ENCODE measurements at regions of chr4 and their contacts with region 1.

Region 1: GRCh38 chr4:69057620-69058409 is 38.5 kb upstream of the UGT2B7 start:
- DNase-seq: peak; percentile 93
- ATAC-seq: peak; percentile 87
- H3K4me3 ChIP-seq: peak overlapping the region; percentile 11 to 43 (median 31); a peak in 5 of 6 replicates
- H3K27ac ChIP-seq: peak overlapping the region; percentile 88
- H3K4me1 ChIP-seq: peaks cover 78% of the 10 kb centered on the region
- H3K27me3 ChIP-seq: no peaks in the 10 kb centered on the region
- CTCF ChIP-seq: no peak
- EP300 ChIP-seq: peak in 1 of 2 experiments; percentile 71; a peak in 1 of 4 replicates
- POLR2A ChIP-seq: peak; percentile 14 to 38
- RAD21 ChIP-seq: no peak

Region 2: GRCh38 chr4:68820770-68821169 is 237.0 kb before region 1 on chr4:
- CTCF ChIA-PET with region 1: no interaction called
- POLR2A ChIA-PET with region 1: interaction called, 3 read pairs
- in situ Hi-C with region 1: no loop called
- intact Hi-C with region 1: loop called (anchors 5 kb)
- DNase-seq: no peak
- ATAC-seq: no peak
- H3K4me3 ChIP-seq: no peak overlapping the region
- H3K27ac ChIP-seq: no peak overlapping the region
- H3K4me1 ChIP-seq: peaks cover 77% of the 10 kb centered on the region
- H3K27me3 ChIP-seq: no peaks in the 10 kb centered on the region
- CTCF ChIP-seq: no peak
- EP300 ChIP-seq: no peak
- POLR2A ChIP-seq: no peak
- RAD21 ChIP-seq: no peak

Region 3: GRCh38 chr4:68861057-68861456 is 196.8 kb before region 1 on chr4:
- CTCF ChIA-PET with region 1: no interaction called
- POLR2A ChIA-PET with region 1: no interaction called
- in situ Hi-C with region 1: no loop called
- intact Hi-C with region 1: no loop called
- DNase-seq: no peak
- ATAC-seq: no peak
- H3K4me3 ChIP-seq: no peak overlapping the region
- H3K27ac ChIP-seq: no peak overlapping the region
- H3K4me1 ChIP-seq: peaks cover 41% of the 10 kb centered on the region
- H3K27me3 ChIP-seq: no peaks in the 10 kb centered on the region
- CTCF ChIP-seq: no peak
- EP300 ChIP-seq: peak in 1 of 2 experiments; percentile 11; a peak in 1 of 4 replicates
- POLR2A ChIP-seq: no peak
- RAD21 ChIP-seq: no peak

Region 4: GRCh38 chr4:68871809-68872642 is 185.8 kb before region 1 on chr4:
- CTCF ChIA-PET with region 1: no interaction called
- POLR2A ChIA-PET with region 1: interaction called, 12 read pairs
- in situ Hi-C with region 1: no loop called
- intact Hi-C with region 1: loop called (anchors 1 kb)
- DNase-seq: peak; percentile 91
- ATAC-seq: peak; percentile 92
- H3K4me3 ChIP-seq: peak overlapping the region in 2 of 3 experiments; percentile 47 to 55; a peak in 3 of 6 replicates
- H3K27ac ChIP-seq: peak overlapping the region; percentile 85
- H3K4me1 ChIP-seq: peaks cover 59% of the 10 kb centered on the region
- H3K27me3 ChIP-seq: no peaks in the 10 kb centered on the region
- CTCF ChIP-seq: no peak
- EP300 ChIP-seq: peak in 1 of 2 experiments; percentile 90; a peak in 2 of 4 replicates
- POLR2A ChIP-seq: no peak; a peak in 1 of 4 replicates
- RAD21 ChIP-seq: peak; percentile 11; the same call in 1 of the 2 replicates

Region 5: DNA sequence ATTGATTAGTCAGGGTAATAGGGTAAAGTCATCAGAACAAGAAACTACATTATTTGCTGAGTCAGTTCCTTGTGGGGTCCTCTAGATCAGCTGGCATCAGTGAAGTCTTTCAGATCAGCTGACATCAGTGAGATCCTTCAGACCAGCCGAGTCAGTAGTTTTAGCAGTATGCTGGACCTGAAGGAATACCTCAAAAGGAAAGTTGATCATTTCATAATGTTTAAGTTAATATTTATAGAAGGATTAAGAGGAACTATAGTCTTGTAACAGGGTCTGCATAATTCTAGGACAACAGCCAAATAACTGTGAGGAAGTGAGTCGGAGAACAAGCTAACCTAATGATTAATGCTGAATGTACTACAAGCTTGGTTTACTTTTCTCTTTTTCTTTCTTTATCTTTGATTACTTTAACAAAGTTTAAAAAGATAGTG is 37.5 kb after region 1 on chr4:
- CTCF ChIA-PET with region 1: no interaction called
- POLR2A ChIA-PET with region 1: interaction called, 14 read pairs
- in situ Hi-C with region 1: no loop called
- intact Hi-C with region 1: loop called (anchors 2 kb)
- DNase-seq: peak; percentile 89
- ATAC-seq: peak; percentile 72
- H3K4me3 ChIP-seq: no peak overlapping the region; a peak in 1 of 6 replicates
- H3K27ac ChIP-seq: peak overlapping the region; percentile 72
- H3K4me1 ChIP-seq: peaks cover 61% of the 10 kb centered on the region
- H3K27me3 ChIP-seq: no peaks in the 10 kb centered on the region
- CTCF ChIP-seq: no peak
- EP300 ChIP-seq: peak in 1 of 2 experiments; percentile 97; a peak in 2 of 4 replicates
- POLR2A ChIP-seq: no peak
- RAD21 ChIP-seq: no peak

Region 6: DNA sequence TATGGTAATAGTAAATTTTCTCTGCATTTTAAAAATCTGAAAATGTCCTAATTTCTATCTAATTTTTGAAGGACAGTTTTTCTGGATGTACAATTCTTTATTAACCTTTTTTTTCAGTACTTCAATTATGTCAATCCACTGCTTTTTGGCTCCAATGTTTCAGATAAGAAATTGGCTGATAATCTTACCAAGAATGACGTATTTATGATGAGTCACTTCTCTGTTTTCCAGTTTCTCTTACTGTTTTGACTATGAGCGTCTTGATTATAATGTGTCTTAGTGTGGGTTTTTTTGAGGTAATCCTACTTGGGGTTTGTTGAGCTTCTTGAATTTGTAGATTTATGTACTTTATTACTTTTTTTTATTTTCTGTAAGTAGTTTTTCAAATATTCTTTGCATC is 109.5 kb after region 1 on chr4:
- CTCF ChIA-PET with region 1: no interaction called
- POLR2A ChIA-PET with region 1: interaction called, 3 read pairs
- in situ Hi-C with region 1: no loop called
- intact Hi-C with region 1: loop called (anchors 5 kb)
- DNase-seq: no peak
- ATAC-seq: no peak
- H3K4me3 ChIP-seq: no peak overlapping the region
- H3K27ac ChIP-seq: no peak overlapping the region
- H3K4me1 ChIP-seq: peaks cover 41% of the 10 kb centered on the region
- H3K27me3 ChIP-seq: no peaks in the 10 kb centered on the region
- CTCF ChIP-seq: no peak
- EP300 ChIP-seq: no peak
- POLR2A ChIP-seq: no peak
- RAD21 ChIP-seq: no peak

Measured in HepG2 (cell line).